Stomach (tissue), 19 donors: ENCODE measurements at regions of chr2 and their contacts with region 1.

Region 1: GRCh38 chr2:152335010-152335725 is at the start of gene FMNL2:
- DNase-seq: peak; percentile 87 to 95
- H3K4me3 ChIP-seq: peak within 1 kb of the TSS; percentile 82 to 90 (median 88)
- H3K27ac ChIP-seq: peak within 1 kb of the TSS; percentile 81 to 92 (median 88)
- H3K4me1 ChIP-seq: peaks cover 11 to 53% (median 24%) of the 10 kb centered on the region in 4 donors
- H3K27me3 ChIP-seq: peaks cover 0 to 12% (median 0%) of the 10 kb centered on the region in 3 donors
- CTCF ChIP-seq: no peak
- EP300 ChIP-seq: no peak
- POLR2A ChIP-seq: peak in 1 of 4 donors; percentile 26
- total RNA-seq, gene FMNL2: 25.8 to 100.0 (median 54.3) TPM

Region 2: GRCh38 chr2:152611458-152612231 is 276.5 kb after region 1 on chr2:
- intact Hi-C with region 1: no loop called
- DNase-seq: peak in 1 of 2 donors; percentile 46
- H3K4me3 ChIP-seq: no peak overlapping the region
- H3K27ac ChIP-seq: peak overlapping the region in 4 of 5 donors; percentile 32 to 74 (median 53)
- H3K4me1 ChIP-seq: peaks cover 0 to 13% (median 0%) of the 10 kb centered on the region in 4 donors
- H3K27me3 ChIP-seq: no peaks in the 10 kb centered on the region
- CTCF ChIP-seq: no peak
- EP300 ChIP-seq: no peak
- POLR2A ChIP-seq: no peak

Region 3: DNA sequence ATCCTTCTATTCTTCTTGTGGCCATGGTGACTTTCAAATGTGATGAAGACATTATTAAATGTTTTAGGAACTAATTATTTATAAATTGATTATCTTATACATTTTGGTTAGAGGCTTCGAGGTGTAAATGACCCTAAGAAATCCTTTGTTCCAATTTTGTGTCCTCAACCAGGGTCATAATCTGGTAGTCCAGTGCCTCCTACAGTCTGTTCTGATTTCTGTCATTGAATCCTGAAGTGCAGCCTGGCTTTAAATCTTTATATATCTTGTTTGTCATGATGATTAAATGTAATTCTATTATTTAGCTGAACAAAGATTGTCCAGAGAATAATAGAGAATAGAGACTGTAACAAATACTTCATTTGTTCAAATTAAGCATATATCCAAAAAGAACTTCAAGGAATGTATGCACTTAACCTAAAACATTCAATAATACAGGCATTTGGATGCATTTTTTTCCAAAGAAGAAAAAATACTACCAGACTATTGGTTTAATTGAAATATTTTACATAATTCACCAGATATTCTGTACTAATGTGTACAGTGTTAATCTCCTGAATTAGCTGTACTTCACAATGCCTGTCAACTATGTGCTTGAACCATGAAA is 292.3 kb after region 1 on chr2:
- intact Hi-C with region 1: loop called (anchors 10 kb)
- DNase-seq: peak in 1 of 2 donors; percentile 63
- H3K4me3 ChIP-seq: no peak overlapping the region
- H3K27ac ChIP-seq: no peak overlapping the region
- H3K4me1 ChIP-seq: peaks cover 0 to 12% (median 4%) of the 10 kb centered on the region in 4 donors
- H3K27me3 ChIP-seq: no peaks in the 10 kb centered on the region
- CTCF ChIP-seq: peak in 4 of 7 experiments; percentile 27 to 53 (median 46)
- EP300 ChIP-seq: no peak
- POLR2A ChIP-seq: no peak